WTC11 (cell line): ENCODE measurements at regions of chr1 and their contacts with region 1.

Region 1: DNA sequence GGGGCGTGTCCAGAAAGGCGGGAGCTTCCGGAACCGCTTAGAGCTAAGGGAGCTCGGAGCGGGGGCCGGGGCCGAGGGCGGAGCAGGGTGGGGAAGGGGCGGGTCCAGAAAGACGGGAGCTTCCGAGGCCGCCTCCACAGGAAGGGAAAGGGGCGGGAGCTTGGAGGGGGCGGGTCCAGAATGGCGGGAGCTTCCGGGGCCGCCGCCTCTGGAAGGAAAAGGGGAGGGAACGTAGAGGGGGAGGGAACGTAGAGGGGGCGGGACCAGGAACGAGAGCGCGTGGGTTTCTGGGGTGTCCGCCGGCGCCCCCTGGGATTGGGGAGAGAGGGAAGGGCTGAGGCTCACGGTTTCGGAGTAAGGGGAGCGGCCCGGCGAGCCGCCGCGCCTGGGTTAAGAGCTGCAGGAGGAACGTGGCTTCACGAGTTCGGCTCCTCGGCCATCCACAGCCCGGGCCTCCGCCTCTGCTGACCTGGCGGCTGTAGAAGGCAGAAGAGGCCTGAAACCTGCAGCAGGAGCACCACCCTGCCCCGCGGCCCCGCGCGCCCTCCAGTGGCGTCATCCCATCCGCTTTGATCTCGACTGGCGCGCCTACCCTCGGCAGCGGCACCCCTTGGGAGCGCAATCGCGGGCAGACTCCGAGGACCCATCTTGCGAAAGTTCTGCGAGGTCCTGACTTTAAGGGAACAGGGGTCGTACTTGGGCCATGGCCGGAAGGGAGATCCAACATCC is 22.9 kb upstream of the HPDL start:
- DNase-seq: peak; percentile 99
- ATAC-seq: peak; percentile 90
- H3K4me3 Mint-ChIP-seq: peak overlapping the region; percentile 86
- H3K27ac Mint-ChIP-seq: peak overlapping the region; percentile 91
- H3K4me1 Mint-ChIP-seq: peaks cover 53% of the 10 kb centered on the region
- H3K27me3 Mint-ChIP-seq: no peaks in the 10 kb centered on the region
- CTCF ChIP-seq: peak; percentile 37; the same call in 1 of the 2 replicates

Region 2: GRCh38 chr1:45116340-45116739 is 187.4 kb before region 1 on chr1:
- CTCF ChIA-PET with region 1: no interaction called
- POLR2A ChIA-PET with region 1: no interaction called
- DNase-seq: no peak
- ATAC-seq: no peak
- H3K4me3 Mint-ChIP-seq: no peak overlapping the region
- H3K27ac Mint-ChIP-seq: no peak overlapping the region
- H3K4me1 Mint-ChIP-seq: peaks cover 8% of the 10 kb centered on the region
- H3K27me3 Mint-ChIP-seq: no peaks in the 10 kb centered on the region; the same call in 1 of the 2 replicates
- CTCF ChIP-seq: no peak

Region 3: DNA sequence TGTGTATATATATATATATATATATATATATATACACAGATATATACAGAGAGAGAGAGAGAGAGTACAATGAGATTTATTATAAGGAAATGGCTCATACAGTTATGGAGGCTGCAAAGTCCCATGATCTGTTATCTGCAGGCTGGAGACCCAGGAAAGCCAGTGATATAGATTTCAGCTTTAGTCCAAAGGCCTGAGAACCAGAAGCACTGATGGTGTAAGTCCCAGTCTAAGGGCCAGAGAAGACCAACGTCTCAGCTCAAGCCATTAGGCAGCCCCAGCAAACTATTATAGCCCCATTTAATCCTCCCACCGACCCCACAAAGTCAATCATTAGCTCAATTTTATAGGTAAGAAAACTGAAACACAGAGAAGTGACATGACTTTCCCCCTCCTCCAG is 12.0 kb before region 1 on chr1:
- CTCF ChIA-PET with region 1: interaction called, 15 read pairs
- POLR2A ChIA-PET with region 1: no interaction called
- DNase-seq: no peak
- ATAC-seq: no peak
- H3K4me3 Mint-ChIP-seq: no peak overlapping the region
- H3K27ac Mint-ChIP-seq: no peak overlapping the region
- H3K4me1 Mint-ChIP-seq: no peaks in the 10 kb centered on the region
- H3K27me3 Mint-ChIP-seq: peaks cover 6% of the 10 kb centered on the region; the same call in 1 of the 2 replicates
- CTCF ChIP-seq: no peak

Region 4: DNA sequence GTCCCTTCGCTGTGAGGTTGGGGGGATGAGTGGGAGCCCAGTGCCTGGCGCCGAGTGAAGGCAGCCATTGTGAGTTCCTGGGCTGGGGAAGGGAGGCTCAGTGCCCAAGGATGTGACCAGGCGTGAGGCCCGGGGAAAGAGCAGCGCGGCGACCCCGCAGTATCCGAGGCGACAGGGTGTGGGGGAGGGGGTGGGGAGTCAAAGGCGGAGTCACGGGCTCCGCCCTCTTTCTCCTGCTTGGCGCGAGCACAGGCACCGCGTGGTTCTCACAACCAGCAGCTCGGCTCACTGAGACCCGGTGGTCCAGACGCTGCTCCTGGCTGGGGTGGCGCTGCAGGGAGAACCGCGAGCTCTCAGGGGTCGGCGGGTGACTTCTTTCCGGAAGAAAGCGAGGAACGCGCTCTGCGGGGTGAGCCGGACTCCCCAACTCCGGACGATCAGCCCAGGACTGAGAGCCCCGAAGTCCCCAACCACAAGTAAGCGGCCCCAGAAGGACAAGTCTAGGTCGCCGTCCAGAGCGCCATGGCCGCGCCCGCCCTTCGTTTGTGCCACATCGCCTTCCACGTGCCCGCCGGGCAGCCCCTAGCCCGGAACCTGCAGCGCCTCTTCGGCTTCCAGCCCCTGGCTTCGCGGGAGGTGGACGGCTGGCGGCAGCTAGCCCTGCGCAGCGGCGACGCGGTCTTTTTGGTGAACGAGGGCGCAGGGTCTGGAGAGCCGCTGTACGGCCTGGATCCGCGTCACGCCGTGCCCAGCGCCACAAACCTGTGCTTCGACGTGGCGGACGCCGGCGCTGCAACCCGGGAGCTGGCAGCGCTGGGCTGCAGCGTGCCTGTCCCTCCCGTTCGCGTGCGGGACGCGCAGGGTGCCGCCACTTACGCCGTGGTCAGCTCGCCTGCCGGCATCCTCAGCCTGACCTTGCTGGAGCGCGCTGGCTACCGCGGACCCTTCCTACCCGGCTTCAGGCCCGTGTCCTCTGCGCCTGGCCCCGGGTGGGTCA is 23.2 kb after region 1 on chr1 and contains the start of gene HPDL:
- CTCF ChIA-PET with region 1: interaction called, 25 read pairs
- POLR2A ChIA-PET with region 1: interaction called, 52 read pairs
- DNase-seq: peak; percentile 86
- ATAC-seq: peak; percentile 83
- H3K4me3 Mint-ChIP-seq: peak within 1 kb of the TSS; percentile 70
- H3K27ac Mint-ChIP-seq: peak within 1 kb of the TSS; percentile 79
- H3K4me1 Mint-ChIP-seq: peaks cover 46% of the 10 kb centered on the region
- H3K27me3 Mint-ChIP-seq: no peaks in the 10 kb centered on the region; the same call in 1 of the 2 replicates
- CTCF ChIP-seq: no peak
- total RNA-seq, gene HPDL: 24.9 to 44.0 TPM (median 27.8 TPM) in 3 replicates

Region 5: DNA sequence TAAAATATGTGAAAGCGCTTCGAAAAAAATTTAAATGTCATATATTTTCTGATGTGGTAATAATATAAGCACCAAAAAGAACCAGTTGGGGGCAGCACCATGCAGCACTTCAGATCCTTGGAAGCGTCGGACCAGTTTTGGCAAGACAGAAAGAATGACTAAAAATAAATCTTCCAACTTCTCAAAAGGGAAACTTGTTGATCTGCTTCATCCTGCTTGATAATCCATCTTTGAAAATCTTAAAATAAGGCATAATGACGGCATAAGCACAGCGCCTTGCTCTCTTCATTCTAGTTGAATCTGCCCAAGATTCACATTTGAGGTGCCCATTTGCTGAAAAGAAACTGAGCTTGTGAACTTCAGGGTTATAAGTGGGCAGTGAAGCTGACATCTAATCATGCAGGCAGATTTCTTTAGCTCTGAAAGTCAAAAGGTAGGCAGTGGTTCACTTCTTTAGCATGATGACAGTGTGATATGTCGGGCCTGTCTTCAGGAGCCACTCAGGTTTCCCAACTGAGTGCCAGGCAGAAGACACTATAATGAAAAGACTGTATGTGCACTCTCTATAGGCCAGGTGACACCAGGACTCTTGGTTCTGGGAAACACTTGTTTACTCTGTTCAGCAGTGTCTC is 56.3 kb after region 1 on chr1:
- CTCF ChIA-PET with region 1: interaction called, 10 read pairs
- POLR2A ChIA-PET with region 1: no interaction called
- DNase-seq: peak; percentile 32
- ATAC-seq: peak; percentile 50
- H3K4me3 Mint-ChIP-seq: peak overlapping the region; percentile 55
- H3K27ac Mint-ChIP-seq: peak overlapping the region; percentile 95
- H3K4me1 Mint-ChIP-seq: peaks cover 30% of the 10 kb centered on the region
- H3K27me3 Mint-ChIP-seq: no peaks in the 10 kb centered on the region
- CTCF ChIP-seq: peak; percentile 20; the same call in 1 of the 2 replicates

Region 6: DNA sequence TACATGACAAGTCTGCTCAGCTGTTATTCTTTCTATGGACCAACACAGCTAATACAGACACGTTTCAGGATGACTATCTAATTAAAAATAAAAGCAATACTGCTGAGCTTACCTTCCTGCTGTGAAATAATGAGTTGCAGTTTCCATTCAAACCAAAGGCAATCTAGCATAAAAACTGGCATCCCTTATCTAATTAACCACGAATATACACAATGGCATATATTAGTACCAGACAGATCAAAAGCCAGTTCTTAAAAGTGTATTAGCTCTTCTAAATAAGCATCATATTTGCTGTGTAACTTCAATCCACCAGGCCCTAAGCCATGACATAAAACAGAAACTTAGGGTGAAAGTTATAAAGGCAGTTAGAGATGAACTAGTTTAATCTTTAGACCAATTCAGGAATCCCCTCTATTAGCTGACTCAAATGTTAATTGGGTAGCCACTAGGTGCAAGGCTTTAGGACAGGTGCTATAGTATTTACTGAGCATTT is 166.6 kb after region 1 on chr1:
- CTCF ChIA-PET with region 1: no interaction called
- POLR2A ChIA-PET with region 1: no interaction called
- DNase-seq: no peak
- ATAC-seq: no peak
- H3K4me3 Mint-ChIP-seq: no peak overlapping the region
- H3K27ac Mint-ChIP-seq: no peak overlapping the region
- H3K4me1 Mint-ChIP-seq: no peaks in the 10 kb centered on the region
- H3K27me3 Mint-ChIP-seq: no peaks in the 10 kb centered on the region
- CTCF ChIP-seq: no peak

Region 7: DNA sequence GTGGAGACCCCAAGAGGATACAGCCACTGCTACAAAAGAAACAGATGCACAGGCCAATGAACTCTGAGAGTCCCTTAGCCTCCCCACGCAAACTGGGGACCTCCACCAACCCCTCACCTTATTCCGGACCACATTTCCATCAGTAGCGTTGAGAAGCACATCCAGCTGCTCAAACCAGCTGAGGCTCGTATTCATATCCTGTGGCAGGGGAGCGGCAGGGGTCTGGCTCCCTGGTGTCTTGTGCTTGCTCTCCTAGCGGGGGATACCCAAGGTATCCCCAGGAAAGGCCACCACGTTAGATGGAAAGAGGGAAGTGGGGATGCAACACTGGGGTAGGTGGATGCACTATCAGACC is 195.6 kb after region 1 on chr1:
- CTCF ChIA-PET with region 1: interaction called, 31 read pairs
- POLR2A ChIA-PET with region 1: no interaction called
- DNase-seq: no peak
- ATAC-seq: no peak
- H3K4me3 Mint-ChIP-seq: peak overlapping the region; percentile 97
- H3K27ac Mint-ChIP-seq: peak overlapping the region; percentile 90; the same call in 1 of the 2 replicates
- H3K4me1 Mint-ChIP-seq: peaks cover 16% of the 10 kb centered on the region
- H3K27me3 Mint-ChIP-seq: no peaks in the 10 kb centered on the region
- CTCF ChIP-seq: no peak